Ascending aorta (tissue), 2 donors: ENCODE measurements at regions of chr4 and their contacts with region 1.

Region 1: DNA sequence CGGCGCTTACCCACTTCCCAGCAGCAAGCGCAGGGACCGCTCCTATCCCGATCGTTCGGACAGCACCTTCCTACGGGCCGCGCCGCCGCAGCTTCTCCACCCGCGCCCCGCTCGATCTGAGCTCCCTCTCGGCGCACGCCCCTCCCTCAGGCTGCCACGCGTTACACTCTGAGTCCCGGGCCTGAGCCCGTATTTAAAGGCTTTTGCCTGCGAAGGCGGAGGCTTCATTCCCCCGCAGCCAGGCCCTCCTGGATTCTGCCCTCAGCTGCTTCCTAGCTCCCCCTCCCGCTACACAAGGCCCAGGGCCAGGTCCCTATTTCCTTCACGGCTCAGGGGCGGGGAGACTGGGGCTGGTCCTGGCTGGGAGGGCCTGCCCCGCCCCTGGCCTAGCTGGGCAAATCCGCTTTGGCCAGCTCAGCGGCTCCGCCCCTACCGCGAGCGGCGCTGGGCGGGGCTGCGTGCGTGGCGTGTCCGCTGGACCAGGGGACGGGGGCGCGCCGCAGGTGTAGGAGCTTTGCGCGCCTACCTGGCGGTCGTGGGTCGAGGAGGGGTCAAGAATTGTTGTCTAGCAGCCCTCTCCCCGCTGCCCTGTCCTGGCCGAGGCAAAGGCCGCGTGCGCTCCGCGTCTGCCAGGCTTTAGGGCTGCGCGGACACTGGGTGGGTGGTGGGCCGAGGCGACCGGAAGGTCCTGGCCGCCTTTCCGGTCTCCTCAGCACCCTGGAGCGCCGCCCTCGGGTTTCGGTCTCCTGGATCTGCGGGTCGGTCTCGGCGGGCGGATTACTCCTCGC is at the start of gene UGDH:
- DNase-seq: peak; percentile 89 to 98
- H3K4me3 ChIP-seq: peak within 1 kb of the TSS; percentile 56 to 100
- H3K27ac ChIP-seq: peak within 1 kb of the TSS; percentile 96 to 98
- H3K4me1 ChIP-seq: peaks cover 0 to 13% of the 10 kb centered on the region in 2 donors
- H3K27me3 ChIP-seq: no peaks in the 10 kb centered on the region
- CTCF ChIP-seq: peak in 2 of 3 experiments; percentile 14 to 16
- total RNA-seq, gene UGDH: 81.1 TPM

Region 2: GRCh38 chr4:38046728-38047489 is 1480.6 kb before region 1 on chr4:
- intact Hi-C with region 1: no loop called
- DNase-seq: no peak
- H3K4me3 ChIP-seq: no peak overlapping the region
- H3K27ac ChIP-seq: peak overlapping the region in 1 of 2 donors; percentile 27
- H3K4me1 ChIP-seq: peaks cover 0 to 2% of the 10 kb centered on the region in 2 donors
- H3K27me3 ChIP-seq: no peaks in the 10 kb centered on the region
- CTCF ChIP-seq: peak in 1 of 3 experiments; percentile 11

Region 3: GRCh38 chr4:39201963-39202362 is 325.5 kb before region 1 on chr4:
- intact Hi-C with region 1: no loop called
- DNase-seq: no peak
- H3K4me3 ChIP-seq: no peak overlapping the region
- H3K27ac ChIP-seq: no peak overlapping the region
- H3K4me1 ChIP-seq: peaks cover 0 to 4% of the 10 kb centered on the region in 2 donors
- H3K27me3 ChIP-seq: no peaks in the 10 kb centered on the region
- CTCF ChIP-seq: no peak

Region 4: GRCh38 chr4:39458505-39459300 is 68.8 kb before region 1 on chr4 and contains the starts of genes LIAS and RPL9:
- intact Hi-C with region 1: loop called (anchors 2 kb)
- DNase-seq: peak; percentile 90 to 98
- H3K4me3 ChIP-seq: peak within 1 kb of the TSS; percentile 82 to 96
- H3K27ac ChIP-seq: peak within 1 kb of the TSS; percentile 96 to 98
- H3K4me1 ChIP-seq: peaks cover 2 to 16% of the 10 kb centered on the region in 2 donors
- H3K27me3 ChIP-seq: no peaks in the 10 kb centered on the region
- CTCF ChIP-seq: peak in 1 of 3 experiments; percentile 24
- total RNA-seq, gene LIAS: 2.9 TPM
- total RNA-seq, gene RPL9: 1,701 TPM

Region 5: DNA sequence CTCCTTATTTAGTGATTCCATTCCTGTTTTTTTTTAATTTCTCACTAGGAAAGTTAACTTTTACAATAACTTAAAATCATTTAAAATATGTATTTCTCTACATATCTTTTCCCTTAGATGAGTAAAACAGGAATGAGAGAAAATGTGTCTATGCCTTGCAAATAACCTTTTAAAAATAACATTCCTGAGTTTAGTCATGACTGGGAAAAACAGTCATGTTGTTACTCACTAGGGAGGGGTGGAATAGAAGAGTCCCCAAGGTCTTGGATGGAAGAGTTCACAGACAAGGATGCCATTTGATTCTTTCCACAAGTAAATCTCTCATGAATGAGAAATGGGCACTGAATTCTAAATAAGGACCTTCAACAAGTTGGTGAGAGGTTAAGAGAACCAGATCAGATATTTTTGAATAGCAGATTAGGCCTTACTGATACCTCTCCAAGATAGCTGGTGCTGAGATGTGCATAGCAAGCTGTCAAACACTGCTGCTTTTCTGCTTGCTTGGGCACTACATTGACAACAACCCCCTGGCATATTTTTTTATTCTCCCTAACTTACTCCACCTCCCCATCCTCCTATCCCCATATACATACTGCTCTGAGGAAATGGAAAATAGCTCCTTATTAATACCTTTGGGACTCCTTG is 25.3 kb before region 1 on chr4:
- intact Hi-C with region 1: loop called (anchors 2 kb)
- DNase-seq: no peak
- H3K4me3 ChIP-seq: no peak overlapping the region
- H3K27ac ChIP-seq: peak overlapping the region; percentile 57 to 65
- H3K4me1 ChIP-seq: peaks cover 0 to 3% of the 10 kb centered on the region in 2 donors
- H3K27me3 ChIP-seq: no peaks in the 10 kb centered on the region
- CTCF ChIP-seq: no peak

Region 6: GRCh38 chr4:39638354-39639240 is 111.1 kb after region 1 on chr4 and contains the start of gene SMIM14:
- intact Hi-C with region 1: loop called (anchors 1 kb)
- DNase-seq: peak; percentile 96 to 99
- H3K4me3 ChIP-seq: peak within 1 kb of the TSS; percentile 70 to 86
- H3K27ac ChIP-seq: peak within 1 kb of the TSS; percentile 96
- H3K4me1 ChIP-seq: peaks cover 0 to 12% of the 10 kb centered on the region in 2 donors
- H3K27me3 ChIP-seq: no peaks in the 10 kb centered on the region
- CTCF ChIP-seq: peak in 1 of 3 experiments; percentile 32
- total RNA-seq, gene SMIM14: 48.2 TPM

Region 7: GRCh38 chr4:39977489-39978377 is 450.3 kb after region 1 on chr4 and contains the start of gene PDS5A:
- intact Hi-C with region 1: loop called (anchors 2 kb)
- DNase-seq: peak; percentile 44 to 93
- H3K4me3 ChIP-seq: peak within 1 kb of the TSS; percentile 98 to 99
- H3K27ac ChIP-seq: peak within 1 kb of the TSS; percentile 94 to 95
- H3K4me1 ChIP-seq: peaks cover 0 to 18% of the 10 kb centered on the region in 2 donors
- H3K27me3 ChIP-seq: no peaks in the 10 kb centered on the region
- CTCF ChIP-seq: peak; percentile 71 to 94 (median 83)
- total RNA-seq, gene PDS5A: 52.9 TPM